Activated B cell treated with CpG ODN at 0.5 μM for 24 hours (primary cell): ENCODE measurements at regions of chr14 and their contacts with region 1.

Region 1: DNA sequence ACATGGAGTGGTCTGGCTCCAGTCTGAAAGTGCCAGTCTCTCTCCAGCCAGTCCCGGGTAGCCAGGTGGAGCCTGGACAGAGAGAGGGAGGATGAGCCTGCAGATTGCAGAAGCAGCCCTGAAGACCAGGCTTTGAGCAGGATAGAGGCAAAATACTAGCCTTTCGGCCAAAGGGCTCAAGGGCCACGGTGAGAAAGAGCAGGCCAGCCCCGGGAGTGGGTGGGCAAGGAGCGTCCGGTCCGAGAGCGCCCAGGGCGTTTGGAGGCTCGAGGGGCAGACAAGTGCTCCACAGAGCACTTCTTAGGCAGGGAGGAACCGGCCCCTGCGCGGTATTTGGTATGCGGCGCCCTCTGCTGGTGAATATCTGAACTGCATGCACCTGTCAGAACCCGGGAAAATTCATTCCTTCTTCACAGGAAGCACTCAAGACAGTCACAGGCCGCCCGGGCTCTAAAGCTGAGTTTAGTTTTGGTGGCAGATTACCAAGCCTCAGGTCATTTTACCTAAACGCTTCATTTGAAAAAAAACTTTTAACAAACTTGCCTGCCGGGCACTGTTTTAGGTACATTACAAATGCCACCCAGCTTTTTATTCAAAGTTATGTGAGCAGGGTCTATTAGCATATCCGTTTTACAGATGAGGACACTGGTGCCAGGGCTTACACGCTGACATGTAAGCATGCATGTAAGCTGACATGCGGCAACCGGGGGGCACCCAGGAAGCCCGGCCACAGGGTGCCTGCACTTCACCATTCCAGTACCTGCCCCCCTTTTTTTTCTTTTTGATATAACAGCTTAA is 21.0 kb upstream of the PSMC1 start:
- DNase-seq: peak; percentile 30
- ATAC-seq: peak; percentile 60
- H3K4me3 Mint-ChIP-seq: no peak overlapping the region
- H3K27ac Mint-ChIP-seq: no peak overlapping the region
- H3K4me1 Mint-ChIP-seq: no peaks in the 10 kb centered on the region
- H3K27me3 Mint-ChIP-seq: peaks cover 24% of the 10 kb centered on the region
- CTCF ChIP-seq: no peak

Region 2: DNA sequence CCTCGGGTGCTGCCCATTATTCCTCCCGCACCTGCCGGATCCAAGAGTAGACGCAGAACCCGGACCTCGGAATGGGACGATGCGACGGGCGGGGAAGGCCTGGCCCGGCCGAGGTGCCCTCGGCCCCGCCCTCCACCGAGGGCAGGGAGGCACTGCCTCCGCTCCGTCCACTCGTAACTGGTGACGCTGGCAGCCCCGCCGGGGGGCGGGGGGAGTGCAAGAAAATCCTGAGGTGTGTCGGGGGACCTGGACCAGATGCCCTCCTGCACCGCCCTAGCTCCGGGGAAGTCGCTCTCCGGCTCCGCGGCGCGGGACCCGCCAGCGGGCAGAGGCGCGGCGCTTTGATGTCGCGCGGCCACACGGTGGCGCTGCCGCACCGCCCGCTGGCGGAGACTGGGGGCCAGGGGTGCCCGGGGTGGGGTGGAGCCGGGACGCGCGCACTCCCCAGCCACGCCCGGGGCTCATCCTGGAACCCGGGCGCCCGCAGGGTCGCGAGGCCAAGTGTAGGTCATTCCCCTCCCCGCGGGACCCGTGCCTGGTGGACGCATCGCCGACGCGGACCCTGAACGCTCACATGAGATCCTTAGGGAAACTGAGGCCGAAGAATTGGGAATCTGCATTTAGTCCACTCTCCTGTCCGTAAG is 1208.2 kb before region 1 on chr14:
- CTCF ChIA-PET with region 1: interaction called, 4 read pairs
- POLR2A ChIA-PET with region 1: no interaction called
- intact Hi-C with region 1: loop called (anchors 10 kb)
- DNase-seq: peak; percentile 67
- ATAC-seq: peak; percentile 92
- H3K4me3 Mint-ChIP-seq: peak overlapping the region; percentile 65
- H3K27ac Mint-ChIP-seq: no peak overlapping the region
- H3K4me1 Mint-ChIP-seq: peaks cover 3% of the 10 kb centered on the region
- H3K27me3 Mint-ChIP-seq: peaks cover 41% of the 10 kb centered on the region
- CTCF ChIP-seq: peak; percentile 54

Region 3: DNA sequence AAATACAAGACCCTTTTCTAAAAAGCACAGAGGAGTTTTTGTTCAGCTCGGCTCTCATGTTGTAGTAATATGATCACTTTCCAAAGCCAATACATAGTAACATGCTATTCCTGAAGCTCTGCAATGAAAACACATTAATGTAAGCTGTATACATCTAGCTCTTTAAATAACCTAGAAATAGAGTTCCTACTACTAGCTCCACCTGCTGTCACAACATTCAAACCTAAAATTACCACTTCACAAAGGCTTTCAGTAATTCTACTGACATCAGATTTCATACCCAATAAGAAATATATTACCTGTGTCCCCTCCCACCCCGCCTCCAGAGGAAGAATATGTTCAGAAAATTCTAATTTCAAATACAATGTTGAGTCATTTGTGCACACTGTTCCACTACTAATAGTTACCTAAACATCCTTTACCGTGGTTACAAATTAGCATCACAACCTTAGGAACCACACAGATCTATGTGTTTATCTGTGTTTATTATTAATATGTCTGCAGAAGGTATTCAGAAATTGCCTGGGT is 298.7 kb before region 1 on chr14:
- CTCF ChIA-PET with region 1: interaction called, 14 read pairs
- POLR2A ChIA-PET with region 1: no interaction called
- intact Hi-C with region 1: no loop called
- DNase-seq: no peak
- ATAC-seq: no peak
- H3K4me3 Mint-ChIP-seq: no peak overlapping the region
- H3K27ac Mint-ChIP-seq: no peak overlapping the region
- H3K4me1 Mint-ChIP-seq: no peaks in the 10 kb centered on the region
- H3K27me3 Mint-ChIP-seq: no peaks in the 10 kb centered on the region
- CTCF ChIP-seq: no peak

Region 4: GRCh38 chr14:89973234-89973823 is 262.0 kb before region 1 on chr14:
- CTCF ChIA-PET with region 1: interaction called, 3 read pairs
- POLR2A ChIA-PET with region 1: no interaction called
- intact Hi-C with region 1: loop called (anchors 1 kb)
- DNase-seq: no peak
- ATAC-seq: peak; percentile 60
- H3K4me3 Mint-ChIP-seq: no peak overlapping the region
- H3K27ac Mint-ChIP-seq: no peak overlapping the region
- H3K4me1 Mint-ChIP-seq: no peaks in the 10 kb centered on the region
- H3K27me3 Mint-ChIP-seq: no peaks in the 10 kb centered on the region
- CTCF ChIP-seq: peak; percentile 83